ENCODE measurements at regions of chr6 and their contacts with region 1.

Region 1: DNA sequence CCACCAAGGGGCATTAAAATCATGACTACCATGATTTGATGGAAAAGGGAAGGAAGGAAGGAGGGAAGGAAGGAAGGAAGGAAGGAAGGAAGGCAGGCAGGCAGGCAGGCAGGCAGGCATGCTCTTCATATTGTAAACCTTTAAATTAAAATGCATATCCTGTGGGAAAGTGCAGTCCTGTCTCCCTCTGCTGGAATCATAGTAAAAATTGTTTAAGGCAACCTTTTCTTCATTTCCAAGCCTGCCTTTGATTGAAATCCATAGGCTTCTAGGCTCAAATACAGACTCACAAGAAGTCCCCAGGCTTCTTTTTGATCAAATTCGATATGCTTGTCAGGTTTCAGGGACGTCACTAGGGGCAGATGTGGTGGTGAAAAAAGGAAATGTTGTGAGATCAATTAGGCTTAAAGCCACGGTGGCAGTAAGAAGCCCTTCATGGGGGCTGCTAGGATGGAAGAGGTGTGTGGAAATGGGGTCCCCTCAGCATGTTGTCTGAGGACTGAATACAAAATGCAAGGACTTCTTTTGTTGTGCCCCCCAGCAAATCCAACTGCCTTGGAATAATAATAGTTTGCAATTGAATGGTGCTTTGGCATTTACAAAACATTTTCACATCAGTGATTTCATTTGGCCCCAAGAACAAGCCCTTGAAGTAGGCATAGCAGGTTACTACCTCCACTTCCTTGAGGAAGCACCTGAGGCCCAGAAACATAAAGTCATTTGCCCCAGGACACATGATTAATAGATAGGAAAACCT is 25.6 kb upstream of the GABRR1 start:
- DNase-seq: peak; percentile 56
- H3K4me3 ChIP-seq: no peak overlapping the region
- H3K27ac ChIP-seq: no peak overlapping the region
- H3K4me1 ChIP-seq: peaks cover 43% of the 10 kb centered on the region
- CTCF ChIP-seq: peak; percentile 76

Region 2: GRCh38 chr6:88982720-88983119 is 260.0 kb before region 1 on chr6:
- CTCF ChIA-PET with region 1: no interaction called
- POLR2A ChIA-PET with region 1: interaction called, 3 read pairs
- intact Hi-C with region 1: loop called (anchors 1 kb)
- DNase-seq: peak; percentile 72
- H3K4me3 ChIP-seq: no peak overlapping the region
- H3K27ac ChIP-seq: no peak overlapping the region
- H3K4me1 ChIP-seq: no peaks in the 10 kb centered on the region
- CTCF ChIP-seq: peak; percentile 98

Region 3: DNA sequence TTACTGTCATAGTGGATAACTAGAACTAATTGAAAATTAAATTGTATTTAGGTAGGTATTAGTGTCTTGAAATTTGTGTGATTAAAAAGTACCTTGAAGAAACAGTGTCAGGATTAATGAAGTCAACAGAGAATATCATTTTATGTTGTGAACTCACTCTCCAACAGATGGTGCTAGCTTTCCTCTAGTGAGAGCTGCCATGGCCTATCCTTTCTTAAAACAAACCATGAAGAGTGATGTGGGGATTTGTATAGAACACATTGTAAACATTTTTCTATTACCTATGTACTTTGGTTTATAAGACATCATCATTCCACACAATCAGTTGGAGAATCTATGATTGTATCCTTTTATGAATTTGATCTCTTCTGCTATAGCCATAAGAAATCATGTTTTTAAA is 120.1 kb before region 1 on chr6:
- CTCF ChIA-PET with region 1: no interaction called
- POLR2A ChIA-PET with region 1: no interaction called
- intact Hi-C with region 1: loop called (anchors 1 kb)
- DNase-seq: peak; percentile 63
- H3K4me3 ChIP-seq: no peak overlapping the region
- H3K27ac ChIP-seq: no peak overlapping the region
- H3K4me1 ChIP-seq: no peaks in the 10 kb centered on the region
- CTCF ChIP-seq: peak; percentile 85

Region 4: DNA sequence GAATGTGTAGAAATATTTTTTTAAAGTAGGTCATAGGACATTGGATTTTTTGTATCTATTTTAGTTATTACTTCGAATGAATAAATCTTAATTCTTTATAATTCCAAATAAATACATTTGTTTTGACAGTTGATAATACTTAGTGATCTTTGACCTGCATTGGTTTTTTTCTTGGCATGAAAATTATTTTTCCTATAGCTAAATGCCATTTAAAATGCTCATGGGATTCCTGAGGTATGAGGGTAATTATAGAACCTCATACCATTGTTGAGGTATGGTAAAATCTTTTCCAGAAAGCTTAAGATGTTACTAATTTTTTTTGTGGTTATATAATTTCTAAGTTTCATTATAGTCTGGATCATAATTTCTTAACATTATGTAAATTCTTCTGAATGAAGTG is 88.6 kb before region 1 on chr6:
- CTCF ChIA-PET with region 1: no interaction called
- POLR2A ChIA-PET with region 1: no interaction called
- intact Hi-C with region 1: no loop called
- DNase-seq: no peak
- H3K4me3 ChIP-seq: no peak overlapping the region
- H3K27ac ChIP-seq: no peak overlapping the region
- H3K4me1 ChIP-seq: peaks cover 5% of the 10 kb centered on the region
- CTCF ChIP-seq: no peak

Region 5: DNA sequence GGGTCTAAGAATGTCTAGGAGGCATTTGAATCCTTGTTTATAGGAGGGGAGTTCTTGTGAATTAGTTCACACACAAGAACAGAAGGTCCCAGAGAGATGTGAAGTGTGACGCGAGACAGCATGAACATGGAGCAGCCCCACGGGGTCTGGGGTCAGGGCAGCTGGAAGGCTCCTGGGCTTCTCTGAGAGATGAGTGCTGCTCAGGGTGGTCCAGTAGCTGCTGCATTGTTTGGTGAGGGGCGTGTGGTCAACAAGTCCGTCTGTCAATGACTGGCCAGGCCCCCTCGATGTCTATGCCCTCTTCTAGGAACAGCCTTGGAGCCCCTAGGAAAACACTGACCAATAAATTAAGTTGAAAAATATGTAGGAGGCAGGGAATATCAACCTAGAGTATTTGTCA is 14.6 kb after region 1 on chr6:
- CTCF ChIA-PET with region 1: no interaction called
- POLR2A ChIA-PET with region 1: no interaction called
- intact Hi-C with region 1: no loop called
- DNase-seq: no peak
- H3K4me3 ChIP-seq: no peak overlapping the region
- H3K27ac ChIP-seq: no peak overlapping the region
- H3K4me1 ChIP-seq: peaks cover 29% of the 10 kb centered on the region
- CTCF ChIP-seq: no peak